Activated naive CD4-positive, alpha-beta T cell treated with anti-CD3 and anti-CD28 coated beads for 36 hours (primary cell): ENCODE measurements at regions of chr20 and their contacts with region 1.

Region 1: GRCh38 chr20:48523212-48523941 is 304.4 kb downstream of the PREX1 start:
- DNase-seq: peak; percentile 26
- H3K4me3 Mint-ChIP-seq: no peak overlapping the region
- H3K27ac Mint-ChIP-seq: no peak overlapping the region
- H3K4me1 Mint-ChIP-seq: no peaks in the 10 kb centered on the region
- H3K27me3 Mint-ChIP-seq: peaks cover 5% of the 10 kb centered on the region

Region 2: GRCh38 chr20:47886460-47887041 is 636.8 kb before region 1 on chr20:
- CTCF ChIA-PET with region 1: no interaction called
- intact Hi-C with region 1: loop called (anchors 5 kb)
- DNase-seq: no peak
- H3K4me3 Mint-ChIP-seq: no peak overlapping the region
- H3K27ac Mint-ChIP-seq: no peak overlapping the region
- H3K4me1 Mint-ChIP-seq: no peaks in the 10 kb centered on the region
- H3K27me3 Mint-ChIP-seq: no peaks in the 10 kb centered on the region

Region 3: GRCh38 chr20:48574393-48574792 is 51.0 kb after region 1 on chr20:
- CTCF ChIA-PET with region 1: no interaction called
- intact Hi-C with region 1: no loop called
- DNase-seq: no peak
- H3K4me3 Mint-ChIP-seq: no peak overlapping the region
- H3K27ac Mint-ChIP-seq: no peak overlapping the region
- H3K4me1 Mint-ChIP-seq: no peaks in the 10 kb centered on the region
- H3K27me3 Mint-ChIP-seq: no peaks in the 10 kb centered on the region